ENCODE measurements at regions of chr5 and their contacts with region 1.

Region 1: DNA sequence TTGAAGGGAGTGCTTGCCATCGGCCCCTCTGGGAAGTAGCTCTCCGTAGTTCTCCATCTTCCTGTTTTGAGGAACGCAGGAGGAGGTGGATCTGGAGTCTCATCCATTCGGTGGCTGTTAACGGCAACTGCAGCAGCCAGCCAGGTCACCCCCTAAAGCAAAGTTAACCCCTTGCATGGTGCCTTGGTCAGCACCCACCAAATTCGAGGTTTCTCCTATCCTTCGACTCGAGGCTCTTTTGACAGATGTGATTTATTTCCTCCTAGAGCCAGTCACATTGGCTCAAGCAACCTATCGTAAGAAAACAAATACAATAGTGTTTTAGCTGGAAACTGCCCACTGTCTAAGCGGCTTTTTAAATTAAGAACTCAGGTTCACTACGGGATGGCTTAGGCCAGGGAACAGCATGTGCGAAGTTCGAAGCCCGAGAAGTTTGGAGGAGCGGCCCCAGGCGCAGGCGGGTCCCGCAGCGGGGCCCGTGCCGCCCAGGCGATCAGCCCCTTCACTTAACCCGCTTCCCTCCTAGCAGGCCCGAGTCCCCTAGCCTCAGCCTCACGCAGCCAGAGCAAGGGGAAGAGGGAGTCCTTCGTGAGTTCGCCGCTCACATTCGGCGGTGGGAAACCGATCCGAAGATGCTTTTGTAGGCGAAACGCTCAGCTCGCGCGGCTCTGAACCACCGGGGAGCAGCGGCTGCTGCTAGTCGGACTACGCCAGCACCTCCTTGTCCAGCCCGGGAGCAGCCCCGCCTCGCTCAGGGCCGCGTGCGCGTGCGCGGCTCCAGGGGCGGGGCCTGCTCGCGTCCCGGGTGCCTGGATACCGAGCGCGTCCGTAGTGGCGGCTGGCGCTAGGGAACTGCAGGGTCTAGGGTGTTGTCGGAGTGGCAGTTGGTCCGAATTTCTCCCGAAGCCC is at the start of gene ROPN1L:
- DNase-seq: peak; percentile 80 to 88
- ATAC-seq: peak; percentile 96 to 97 (median 96)
- H3K4me3 ChIP-seq: peak within 1 kb of the TSS; percentile 88
- H3K4me3 Mint-ChIP-seq: peak within 1 kb of the TSS; percentile 89
- H3K27ac ChIP-seq: peak within 1 kb of the TSS; percentile 42
- H3K27ac Mint-ChIP-seq: peak within 1 kb of the TSS; percentile 26 to 83
- H3K4me1 ChIP-seq: peaks cover 45% of the 10 kb centered on the region
- H3K4me1 Mint-ChIP-seq: peaks cover 38 to 40% of the 10 kb centered on the region in 2 donors
- H3K27me3 ChIP-seq: no peaks in the 10 kb centered on the region
- H3K27me3 Mint-ChIP-seq: no peaks in the 10 kb centered on the region
- CTCF ChIP-seq: no peak
- total RNA-seq, gene ROPN1L: 1.2 to 5.2 (median 4.3) TPM

Region 2: DNA sequence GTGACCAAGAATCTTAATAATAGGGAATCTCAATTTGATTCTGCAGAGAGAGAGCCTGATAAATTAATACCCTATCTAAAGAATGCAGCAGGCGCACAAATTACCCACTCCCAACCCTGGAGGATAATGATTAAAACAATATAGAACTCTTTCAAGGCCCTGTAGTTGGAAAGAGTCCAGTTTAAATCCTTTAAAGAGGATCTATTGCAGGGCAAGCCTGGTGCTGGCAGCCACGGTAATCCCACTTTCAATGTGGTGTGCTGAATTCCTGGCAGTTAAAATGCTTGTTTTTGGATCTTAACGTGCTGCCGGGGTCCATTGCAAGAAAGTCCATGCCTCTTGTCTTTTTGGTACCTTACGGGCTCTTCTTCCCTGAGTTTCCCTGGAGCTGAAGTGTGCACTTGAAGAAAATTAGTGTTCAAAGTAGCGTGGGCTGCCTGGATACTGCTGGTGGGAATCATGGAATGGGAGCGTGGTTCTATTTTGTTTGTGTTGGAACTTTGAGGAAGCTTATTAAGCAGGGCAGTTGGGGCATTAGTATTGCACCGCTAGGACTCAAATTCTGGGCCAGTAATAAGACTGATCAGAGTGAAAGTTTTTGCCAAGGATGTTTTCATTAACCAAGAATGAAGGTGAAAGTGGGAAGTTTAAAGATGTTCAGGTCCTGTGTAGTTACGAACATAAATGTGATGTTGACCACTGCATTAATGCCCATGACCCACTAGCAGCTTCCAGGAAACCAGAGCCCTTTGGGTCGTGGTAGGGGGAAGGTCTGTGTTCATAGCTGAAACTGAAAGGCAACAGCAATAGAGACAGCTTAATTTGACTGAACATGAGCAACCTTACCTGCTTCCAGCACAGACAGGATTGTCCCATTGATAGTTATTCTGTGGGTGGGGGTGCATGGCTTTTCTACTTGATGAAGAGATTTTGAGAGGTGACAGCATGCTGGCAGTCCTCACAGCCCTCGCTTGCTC is 67.0 kb before region 1 on chr5:
- intact Hi-C with region 1: no loop called
- DNase-seq: no peak
- ATAC-seq: peak in 1 of 3 donors; percentile 33
- H3K4me3 ChIP-seq: no peak overlapping the region
- H3K4me3 Mint-ChIP-seq: peak overlapping the region; percentile 60
- H3K27ac ChIP-seq: no peak overlapping the region
- H3K27ac Mint-ChIP-seq: peak overlapping the region; percentile 65 to 79
- H3K4me1 ChIP-seq: peaks cover 33% of the 10 kb centered on the region
- H3K4me1 Mint-ChIP-seq: peaks cover 74 to 77% of the 10 kb centered on the region in 2 donors
- H3K27me3 ChIP-seq: no peaks in the 10 kb centered on the region
- H3K27me3 Mint-ChIP-seq: no peaks in the 10 kb centered on the region
- CTCF ChIP-seq: no peak

Region 3: DNA sequence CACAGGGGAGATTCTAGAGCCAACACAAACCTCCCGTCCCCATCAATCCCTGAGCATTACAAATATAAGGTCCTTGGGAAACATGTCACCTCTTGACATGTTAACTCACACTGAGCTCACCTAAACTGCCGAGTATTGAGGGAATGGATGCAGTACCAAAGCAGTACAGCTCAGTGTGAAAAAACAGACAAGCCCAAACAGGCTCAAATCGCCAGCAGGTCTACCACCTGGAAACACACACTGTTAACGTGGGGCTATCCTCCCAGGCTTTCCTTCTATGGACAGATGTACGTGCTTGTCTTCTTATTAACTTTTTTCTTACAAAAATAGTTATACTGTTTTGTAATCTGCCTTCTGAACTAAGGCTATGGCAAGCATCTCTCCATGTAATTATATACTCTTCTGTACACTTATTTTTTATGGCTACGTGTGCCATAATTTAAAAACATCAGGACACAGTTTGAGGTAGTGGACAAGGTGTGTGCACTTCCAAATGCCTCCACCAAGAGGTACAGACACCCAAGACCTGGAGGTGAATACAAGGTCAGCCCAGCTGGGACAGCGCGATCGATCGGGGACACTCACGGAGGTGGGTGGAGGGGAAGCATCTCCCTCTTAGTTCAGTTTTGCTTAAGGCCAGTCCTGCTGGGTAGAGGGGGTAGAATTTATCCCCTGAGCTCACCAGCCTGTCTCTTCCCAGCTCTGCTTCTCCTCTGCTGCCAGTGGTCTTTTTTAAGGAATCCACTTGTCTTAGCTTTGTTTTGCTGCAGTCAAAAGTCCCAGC is 243.2 kb after region 1 on chr5:
- intact Hi-C with region 1: no loop called
- DNase-seq: no peak
- ATAC-seq: no peak
- H3K4me3 ChIP-seq: no peak overlapping the region
- H3K4me3 Mint-ChIP-seq: no peak overlapping the region
- H3K27ac ChIP-seq: no peak overlapping the region
- H3K27ac Mint-ChIP-seq: peak overlapping the region in 1 of 2 donors; percentile 18
- H3K4me1 ChIP-seq: peaks cover 31% of the 10 kb centered on the region
- H3K4me1 Mint-ChIP-seq: peaks cover 44 to 55% of the 10 kb centered on the region in 2 donors
- H3K27me3 ChIP-seq: no peaks in the 10 kb centered on the region
- H3K27me3 Mint-ChIP-seq: no peaks in the 10 kb centered on the region
- CTCF ChIP-seq: no peak

Region 4: GRCh38 chr5:10695055-10695649 is 253.8 kb after region 1 on chr5:
- intact Hi-C with region 1: loop called (anchors 10 kb)
- DNase-seq: peak in 1 of 2 donors; percentile 25
- ATAC-seq: peak; percentile 33 to 70 (median 50)
- H3K4me3 ChIP-seq: no peak overlapping the region
- H3K4me3 Mint-ChIP-seq: peak overlapping the region; percentile 47
- H3K27ac ChIP-seq: no peak overlapping the region
- H3K27ac Mint-ChIP-seq: peak overlapping the region; percentile 14 to 82
- H3K4me1 ChIP-seq: peaks cover 15% of the 10 kb centered on the region
- H3K4me1 Mint-ChIP-seq: peaks cover 35 to 39% of the 10 kb centered on the region in 2 donors
- H3K27me3 ChIP-seq: no peaks in the 10 kb centered on the region
- H3K27me3 Mint-ChIP-seq: no peaks in the 10 kb centered on the region
- CTCF ChIP-seq: peak; percentile 24

Region 5: GRCh38 chr5:11619339-11620024 is 1178.1 kb after region 1 on chr5:
- intact Hi-C with region 1: no loop called
- DNase-seq: no peak
- ATAC-seq: no peak
- H3K4me3 ChIP-seq: no peak overlapping the region
- H3K4me3 Mint-ChIP-seq: no peak overlapping the region
- H3K27ac ChIP-seq: no peak overlapping the region
- H3K27ac Mint-ChIP-seq: no peak overlapping the region
- H3K4me1 ChIP-seq: no peaks in the 10 kb centered on the region
- H3K4me1 Mint-ChIP-seq: no peaks in the 10 kb centered on the region
- H3K27me3 ChIP-seq: no peaks in the 10 kb centered on the region
- H3K27me3 Mint-ChIP-seq: peaks cover 0 to 4% of the 10 kb centered on the region in 2 donors
- CTCF ChIP-seq: no peak

Measured in natural killer cell (primary cell).